ENCODE measurements at regions of chr4 and their contacts with region 1.

Region 1: GRCh38 chr4:169010125-169011023 is at the start of gene CBR4:
- DNase-seq: peak; percentile 85 to 97 (median 94)
- ATAC-seq: peak; percentile 97
- H3K4me3 ChIP-seq: peak within 1 kb of the TSS; percentile 64
- H3K4me3 Mint-ChIP-seq: peak within 1 kb of the TSS; percentile 93 to 97 (median 96)
- H3K27ac ChIP-seq: peak within 1 kb of the TSS; percentile 87
- H3K27ac Mint-ChIP-seq: peak within 1 kb of the TSS; percentile 92 to 99 (median 97)
- H3K4me1 ChIP-seq: peaks cover 14 to 19% of the 10 kb centered on the region in 2 donors
- H3K4me1 Mint-ChIP-seq: peaks cover 10 to 51% (median 44%) of the 10 kb centered on the region in 7 donors
- H3K27me3 ChIP-seq: no peaks in the 10 kb centered on the region
- H3K27me3 Mint-ChIP-seq: peaks cover 0 to 16% (median 0%) of the 10 kb centered on the region in 5 donors
- total RNA-seq, gene CBR4: 12.4 to 24.5 (median 15.3) TPM

Region 2: GRCh38 chr4:168183717-168184608 is 826.4 kb before region 1 on chr4:
- CTCF ChIA-PET with region 1: interaction called, 4 read pairs
- POLR2A ChIA-PET with region 1: no interaction called
- intact Hi-C with region 1: loop called in 1 of 2 experiments (anchors 10 kb)
- DNase-seq: peak in 4 of 9 donors; percentile 1 to 23 (median 8)
- ATAC-seq: no peak
- H3K4me3 ChIP-seq: no peak overlapping the region
- H3K4me3 Mint-ChIP-seq: no peak overlapping the region
- H3K27ac ChIP-seq: no peak overlapping the region
- H3K27ac Mint-ChIP-seq: no peak overlapping the region
- H3K4me1 ChIP-seq: no peaks in the 10 kb centered on the region
- H3K4me1 Mint-ChIP-seq: peaks cover 0 to 6% (median 0%) of the 10 kb centered on the region in 7 donors
- H3K27me3 ChIP-seq: no peaks in the 10 kb centered on the region
- H3K27me3 Mint-ChIP-seq: peaks cover 0 to 6% (median 0%) of the 10 kb centered on the region in 5 donors

Region 3: DNA sequence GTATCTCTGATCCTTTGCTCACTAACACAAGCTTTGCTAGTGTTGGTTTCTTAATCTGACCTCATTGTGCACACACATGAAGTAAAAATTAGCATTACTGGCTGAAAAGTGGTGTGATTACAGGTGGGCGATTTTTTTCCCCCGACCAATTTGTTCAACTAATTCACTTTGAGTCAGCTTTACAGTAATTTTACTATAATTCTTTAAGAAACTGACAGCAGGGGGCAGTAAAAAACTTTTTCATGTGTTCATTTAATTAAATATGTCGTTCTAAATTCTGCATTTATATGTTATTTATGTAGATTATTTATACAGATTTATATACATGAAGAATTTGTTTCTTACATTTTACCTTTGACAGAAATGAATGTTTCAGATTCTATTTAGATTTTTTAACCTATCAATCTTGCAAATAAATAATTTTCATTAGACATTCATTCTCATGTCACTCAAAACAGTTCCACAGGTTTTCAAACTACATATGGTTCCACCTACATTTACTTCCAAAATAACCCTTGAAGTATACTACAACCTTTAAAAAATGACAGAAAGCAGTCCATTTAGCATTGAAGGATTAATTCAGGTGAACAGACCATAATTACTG is 496.0 kb before region 1 on chr4:
- CTCF ChIA-PET with region 1: interaction called, 9 read pairs
- POLR2A ChIA-PET with region 1: no interaction called
- intact Hi-C with region 1: loop called (anchors 2 to 5 kb)
- DNase-seq: peak in 5 of 9 donors; percentile 16 to 36 (median 25)
- ATAC-seq: no peak
- H3K4me3 ChIP-seq: no peak overlapping the region
- H3K4me3 Mint-ChIP-seq: no peak overlapping the region
- H3K27ac ChIP-seq: no peak overlapping the region
- H3K27ac Mint-ChIP-seq: no peak overlapping the region
- H3K4me1 ChIP-seq: peaks cover 16 to 20% of the 10 kb centered on the region in 2 donors
- H3K4me1 Mint-ChIP-seq: peaks cover 5 to 38% (median 35%) of the 10 kb centered on the region in 7 donors
- H3K27me3 ChIP-seq: no peaks in the 10 kb centered on the region
- H3K27me3 Mint-ChIP-seq: peaks cover 0 to 31% (median 0%) of the 10 kb centered on the region in 5 donors

Region 4: DNA sequence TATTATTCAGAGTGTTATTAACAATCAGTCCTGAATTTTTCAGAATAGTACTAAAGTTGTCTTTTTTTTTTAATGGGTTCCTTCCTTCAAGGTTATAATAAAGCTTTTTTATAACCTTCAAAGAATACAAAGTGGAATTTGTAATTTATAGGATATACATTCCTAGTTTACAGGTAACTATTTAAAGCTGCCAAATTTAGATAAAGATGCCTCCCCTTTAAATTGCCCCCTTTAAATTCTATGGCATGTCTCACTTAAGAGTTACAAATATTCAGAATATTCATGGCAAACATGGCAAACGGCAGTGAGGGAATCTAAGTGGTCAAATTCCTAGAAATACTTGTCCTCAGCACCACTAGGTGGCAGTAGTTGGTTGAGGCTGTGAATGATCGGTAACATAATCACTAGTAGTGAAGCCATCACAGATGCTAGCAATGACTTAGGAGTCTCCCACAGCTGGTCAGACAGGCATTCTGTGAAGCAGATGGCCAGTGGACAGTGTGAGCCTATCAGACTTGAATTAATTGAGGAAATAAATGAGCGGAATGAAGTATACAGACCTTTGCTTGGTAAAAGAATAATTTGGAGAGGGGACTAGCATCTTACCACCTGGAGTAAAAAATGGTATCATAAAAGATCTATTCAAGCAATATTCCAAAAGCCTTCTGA is 86.7 kb before region 1 on chr4:
- CTCF ChIA-PET with region 1: interaction called, 3 read pairs
- POLR2A ChIA-PET with region 1: no interaction called
- intact Hi-C with region 1: loop called (anchors 1 kb)
- DNase-seq: peak in 8 of 9 donors; percentile 23 to 58 (median 42)
- ATAC-seq: peak; percentile 78
- H3K4me3 ChIP-seq: no peak overlapping the region
- H3K4me3 Mint-ChIP-seq: no peak overlapping the region
- H3K27ac ChIP-seq: no peak overlapping the region
- H3K27ac Mint-ChIP-seq: peak overlapping the region in 1 of 9 donors; percentile 78
- H3K4me1 ChIP-seq: no peaks in the 10 kb centered on the region
- H3K4me1 Mint-ChIP-seq: peaks cover 0 to 3% (median 0%) of the 10 kb centered on the region in 7 donors
- H3K27me3 ChIP-seq: no peaks in the 10 kb centered on the region
- H3K27me3 Mint-ChIP-seq: no peaks in the 10 kb centered on the region

Region 5: GRCh38 chr4:169410839-169411770 is 400.7 kb after region 1 on chr4:
- CTCF ChIA-PET with region 1: interaction called, 3 read pairs
- POLR2A ChIA-PET with region 1: interaction called, 6 read pairs
- intact Hi-C with region 1: loop called (anchors 2 to 5 kb)
- DNase-seq: peak; percentile 8 to 79 (median 65)
- ATAC-seq: peak; percentile 96
- H3K4me3 ChIP-seq: no peak overlapping the region
- H3K4me3 Mint-ChIP-seq: peak overlapping the region in 9 of 10 donors; percentile 13 to 73 (median 59)
- H3K27ac ChIP-seq: peak overlapping the region; percentile 18
- H3K27ac Mint-ChIP-seq: peak overlapping the region; percentile 1 to 93 (median 66)
- H3K4me1 ChIP-seq: peaks cover 10 to 28% of the 10 kb centered on the region in 2 donors
- H3K4me1 Mint-ChIP-seq: peaks cover 10 to 45% (median 32%) of the 10 kb centered on the region in 7 donors
- H3K27me3 ChIP-seq: no peaks in the 10 kb centered on the region
- H3K27me3 Mint-ChIP-seq: no peaks in the 10 kb centered on the region

Region 6: DNA sequence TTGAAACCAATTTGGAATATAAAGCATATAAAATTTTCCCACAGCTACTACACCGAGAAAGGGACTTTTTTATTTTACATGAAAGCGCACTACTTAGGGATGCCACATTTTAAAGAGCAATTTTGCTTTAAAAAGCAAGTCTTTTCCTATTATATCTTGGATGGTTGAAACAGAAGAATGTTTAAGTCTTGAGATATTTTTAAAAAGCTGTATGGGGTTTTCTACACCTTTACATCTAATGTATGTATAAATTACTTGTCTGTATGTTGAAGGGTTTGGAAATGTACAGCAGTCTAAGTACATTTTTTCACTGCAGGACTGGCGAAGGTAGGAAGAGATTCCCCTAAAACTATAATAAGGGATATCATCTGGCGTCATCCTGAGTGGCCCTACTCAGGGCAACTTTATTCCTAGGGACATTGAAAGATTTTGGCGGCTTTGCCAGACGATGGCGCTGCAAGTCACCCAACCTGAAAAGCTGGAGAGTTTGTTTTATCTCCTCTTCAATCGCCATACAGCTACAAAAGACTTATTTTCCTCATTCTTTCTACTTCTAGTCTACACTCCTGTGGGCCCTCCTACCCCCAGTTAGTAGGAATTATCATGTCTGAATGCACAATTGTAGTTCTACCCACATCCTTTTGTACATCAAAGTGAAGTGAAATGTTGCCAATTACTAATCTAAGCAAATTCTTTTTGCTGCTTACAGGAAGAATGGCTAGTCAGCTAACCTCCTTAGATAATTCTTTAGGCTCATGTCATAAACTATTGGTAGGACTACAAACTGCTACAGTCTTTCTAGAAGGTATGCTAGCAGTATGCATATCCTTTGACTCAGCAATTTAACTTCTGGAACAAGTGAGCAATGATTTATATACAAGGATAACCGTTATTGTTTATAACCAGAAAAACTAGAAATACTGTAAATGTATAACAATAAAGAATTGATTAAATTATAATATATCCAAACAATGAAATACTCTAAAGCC is 602.8 kb after region 1 on chr4:
- CTCF ChIA-PET with region 1: interaction called, 6 read pairs
- POLR2A ChIA-PET with region 1: no interaction called
- intact Hi-C with region 1: loop called (anchors 1 kb)
- DNase-seq: peak; percentile 37 to 78 (median 73)
- ATAC-seq: peak; percentile 62
- H3K4me3 ChIP-seq: peak overlapping the region; percentile 98
- H3K4me3 Mint-ChIP-seq: peak overlapping the region; percentile 90 to 99 (median 98)
- H3K27ac ChIP-seq: peak overlapping the region; percentile 99
- H3K27ac Mint-ChIP-seq: peak overlapping the region; percentile 97 to 100 (median 100)
- H3K4me1 ChIP-seq: peaks cover 8 to 25% of the 10 kb centered on the region in 2 donors
- H3K4me1 Mint-ChIP-seq: peaks cover 12 to 73% (median 50%) of the 10 kb centered on the region in 7 donors
- H3K27me3 ChIP-seq: no peaks in the 10 kb centered on the region
- H3K27me3 Mint-ChIP-seq: no peaks in the 10 kb centered on the region

Region 7: GRCh38 chr4:170027181-170027829 is 1016.9 kb after region 1 on chr4:
- CTCF ChIA-PET with region 1: no interaction called
- POLR2A ChIA-PET with region 1: interaction called, 3 read pairs
- intact Hi-C with region 1: loop called (anchors 1 to 2 kb)
- DNase-seq: peak; percentile 76 to 92 (median 89)
- ATAC-seq: peak; percentile 83
- H3K4me3 ChIP-seq: peak overlapping the region; percentile 71
- H3K4me3 Mint-ChIP-seq: peak overlapping the region; percentile 86 to 96 (median 94)
- H3K27ac ChIP-seq: peak overlapping the region; percentile 59
- H3K27ac Mint-ChIP-seq: peak overlapping the region; percentile 65 to 89 (median 81)
- H3K4me1 ChIP-seq: peaks cover 0 to 7% of the 10 kb centered on the region in 2 donors
- H3K4me1 Mint-ChIP-seq: peaks cover 6 to 14% (median 11%) of the 10 kb centered on the region in 7 donors
- H3K27me3 ChIP-seq: no peaks in the 10 kb centered on the region
- H3K27me3 Mint-ChIP-seq: peaks cover 0 to 60% (median 8%) of the 10 kb centered on the region in 5 donors

Measured in naive thymus-derived CD4-positive, alpha-beta T cell (primary cell).